Activated CD4-positive, alpha-beta memory T cell treated with anti-CD3 and anti-CD28 coated beads for 36 hours (primary cell): ENCODE measurements at regions of chr19 and their contacts with region 1.

Region 1: DNA sequence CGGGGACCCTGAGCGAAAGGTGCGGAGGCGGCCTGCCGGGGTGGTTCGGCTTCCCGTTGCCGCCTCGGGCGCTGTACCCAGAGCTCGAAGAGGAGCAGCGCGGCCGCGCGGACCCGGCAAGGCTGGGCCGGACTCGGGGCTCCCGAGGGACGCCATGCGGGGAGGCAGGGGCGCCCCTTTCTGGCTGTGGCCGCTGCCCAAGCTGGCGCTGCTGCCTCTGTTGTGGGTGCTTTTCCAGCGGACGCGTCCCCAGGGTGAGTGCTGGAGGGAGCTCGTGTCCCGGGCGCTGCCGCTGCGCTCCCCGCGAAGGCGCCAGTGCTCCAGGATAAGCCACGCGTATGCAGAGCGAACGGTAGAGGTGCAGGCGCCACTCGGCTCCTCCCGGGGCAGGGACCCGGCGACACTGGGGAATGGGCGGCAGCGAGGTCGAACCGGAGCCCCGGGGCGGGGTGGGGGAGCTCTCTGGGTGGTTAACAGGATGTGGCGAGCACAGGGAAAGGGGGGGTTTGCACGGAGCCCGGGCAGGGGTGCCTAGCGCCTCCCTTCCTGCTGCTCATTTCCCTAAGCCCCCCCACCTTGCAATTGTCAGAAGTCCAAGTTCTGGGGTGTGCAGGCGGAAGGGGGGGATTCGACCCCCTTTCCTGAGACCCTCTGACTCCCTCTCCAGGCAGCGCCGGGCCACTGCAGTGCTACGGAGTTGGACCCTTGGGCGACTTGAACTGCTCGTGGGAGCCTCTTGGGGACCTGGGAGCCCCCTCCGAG is at the start of gene IL27RA:
- DNase-seq: peak; percentile 86
- H3K4me3 Mint-ChIP-seq: peak within 1 kb of the TSS; percentile 93
- H3K27ac Mint-ChIP-seq: peak within 1 kb of the TSS; percentile 91
- H3K4me1 Mint-ChIP-seq: peaks cover 21% of the 10 kb centered on the region
- H3K27me3 Mint-ChIP-seq: no peaks in the 10 kb centered on the region
- total RNA-seq, gene IL27RA: 61.9 to 62.0 TPM

Region 2: GRCh38 chr19:13894552-13894951 is 137.3 kb before region 1 on chr19:
- CTCF ChIA-PET with region 1: no interaction called
- POLR2A ChIA-PET with region 1: no interaction called
- intact Hi-C with region 1: no loop called
- DNase-seq: no peak
- H3K4me3 Mint-ChIP-seq: no peak overlapping the region
- H3K27ac Mint-ChIP-seq: no peak overlapping the region
- H3K4me1 Mint-ChIP-seq: no peaks in the 10 kb centered on the region
- H3K27me3 Mint-ChIP-seq: no peaks in the 10 kb centered on the region

Region 3: DNA sequence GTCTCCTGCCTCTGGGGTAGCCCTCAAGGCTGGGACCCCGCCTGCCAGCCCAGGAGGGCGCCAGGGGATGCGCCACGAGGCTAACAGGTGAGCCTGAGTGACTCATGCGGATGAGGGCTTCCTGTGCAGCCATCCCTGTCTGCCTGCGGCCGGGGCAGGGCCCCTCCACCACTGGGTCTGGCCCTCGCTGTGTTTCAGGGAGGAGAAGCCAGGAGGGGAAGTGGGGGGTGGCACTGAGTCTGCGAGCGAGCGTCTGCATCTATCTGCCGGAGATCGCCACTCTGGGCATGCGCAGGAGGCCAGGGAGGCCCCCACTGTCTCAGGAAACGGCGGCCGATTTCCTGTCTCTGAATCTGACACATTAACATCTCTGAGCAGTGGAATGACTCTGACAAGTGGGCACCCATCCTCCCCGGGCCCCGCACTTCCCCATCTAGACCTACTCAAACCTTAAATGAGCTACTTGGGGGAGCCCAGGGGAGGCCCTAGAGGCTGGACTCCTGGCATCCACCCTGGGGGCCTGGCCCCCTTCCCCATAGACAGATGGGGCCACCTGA is 45.5 kb before region 1 on chr19:
- CTCF ChIA-PET with region 1: interaction called, 5 read pairs
- POLR2A ChIA-PET with region 1: interaction called, 5 read pairs
- intact Hi-C with region 1: loop called (anchors 1 kb)
- DNase-seq: peak; percentile 100
- H3K4me3 Mint-ChIP-seq: peak overlapping the region; percentile 62
- H3K27ac Mint-ChIP-seq: peak overlapping the region; percentile 97
- H3K4me1 Mint-ChIP-seq: peaks cover 58% of the 10 kb centered on the region
- H3K27me3 Mint-ChIP-seq: no peaks in the 10 kb centered on the region

Region 4: GRCh38 chr19:14006243-14006765 is 25.6 kb before region 1 on chr19 and contains the start of gene RFX1:
- CTCF ChIA-PET with region 1: interaction called, 13 read pairs
- POLR2A ChIA-PET with region 1: interaction called, 12 read pairs
- intact Hi-C with region 1: no loop called
- DNase-seq: peak; percentile 100
- H3K4me3 Mint-ChIP-seq: peak within 1 kb of the TSS; percentile 89
- H3K27ac Mint-ChIP-seq: peak within 1 kb of the TSS; percentile 97
- H3K4me1 Mint-ChIP-seq: peaks cover 38% of the 10 kb centered on the region
- H3K27me3 Mint-ChIP-seq: no peaks in the 10 kb centered on the region
- total RNA-seq, gene RFX1: 14.4 to 15.2 TPM

Region 5: DNA sequence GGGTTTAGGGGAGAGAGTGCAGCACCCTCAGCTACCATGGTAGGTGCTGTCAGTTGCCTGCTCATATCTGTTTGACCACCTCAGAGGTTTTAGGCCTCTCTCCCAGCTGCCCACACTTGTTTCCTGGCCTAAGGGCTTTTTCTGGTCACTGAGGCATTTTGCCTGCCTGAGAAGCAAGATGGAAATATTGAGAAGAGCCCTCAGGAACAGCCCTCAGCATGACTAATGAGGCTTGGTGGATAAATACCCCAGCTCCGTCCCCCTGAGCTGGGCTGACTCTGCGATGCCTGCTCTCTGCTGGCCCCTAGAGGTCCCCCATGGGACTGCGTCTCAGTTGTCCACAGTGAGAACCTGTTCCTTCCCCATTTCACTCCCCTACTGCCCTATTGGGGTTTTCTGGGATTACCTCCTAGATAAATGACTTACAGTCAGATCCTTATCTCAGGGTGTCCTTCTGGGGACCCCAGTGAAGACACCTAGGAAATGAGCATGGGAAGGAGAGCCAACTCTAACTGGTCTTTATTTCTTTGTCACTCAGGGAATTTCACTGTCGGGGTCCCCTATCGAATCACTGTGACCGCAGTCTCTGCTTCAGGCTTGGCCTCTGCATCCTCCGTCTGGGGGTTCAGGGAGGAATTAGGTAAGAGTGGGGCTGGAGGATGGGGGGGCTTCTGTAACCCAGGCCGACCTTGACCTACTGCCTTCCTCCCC is 16.7 kb after region 1 on chr19:
- CTCF ChIA-PET with region 1: interaction called, 11 read pairs
- POLR2A ChIA-PET with region 1: interaction called, 5 read pairs
- intact Hi-C with region 1: no loop called
- DNase-seq: peak; percentile 83
- H3K4me3 Mint-ChIP-seq: no peak overlapping the region
- H3K27ac Mint-ChIP-seq: peak overlapping the region; percentile 51
- H3K4me1 Mint-ChIP-seq: peaks cover 4% of the 10 kb centered on the region
- H3K27me3 Mint-ChIP-seq: no peaks in the 10 kb centered on the region

Region 6: GRCh38 chr19:14073261-14073924 is 41.5 kb after region 1 on chr19:
- CTCF ChIA-PET with region 1: interaction called, 14 read pairs
- POLR2A ChIA-PET with region 1: no interaction called
- intact Hi-C with region 1: no loop called
- DNase-seq: peak; percentile 80
- H3K4me3 Mint-ChIP-seq: peak overlapping the region; percentile 95
- H3K27ac Mint-ChIP-seq: peak overlapping the region; percentile 84
- H3K4me1 Mint-ChIP-seq: peaks cover 13% of the 10 kb centered on the region
- H3K27me3 Mint-ChIP-seq: no peaks in the 10 kb centered on the region